ENCODE measurements at regions of chr9 and their contacts with region 1.

Region 1: GRCh38 chr9:86282077-86282978 is at the start of gene ISCA1:
- DNase-seq: peak; percentile 98
- H3K4me3 ChIP-seq: peak within 1 kb of the TSS; percentile 21 to 86 (median 37)
- H3K27ac ChIP-seq: peak within 1 kb of the TSS; percentile 94 to 98 (median 98)
- H3K4me1 ChIP-seq: peaks cover 22 to 28% of the 10 kb centered on the region in 2 donors
- H3K27me3 ChIP-seq: no peaks in the 10 kb centered on the region
- CTCF ChIP-seq: no peak
- POLR2A ChIP-seq: peak; percentile 76 to 95
- total RNA-seq, gene ISCA1: 47.9 to 79.1 (median 63.8) TPM

Region 2: DNA sequence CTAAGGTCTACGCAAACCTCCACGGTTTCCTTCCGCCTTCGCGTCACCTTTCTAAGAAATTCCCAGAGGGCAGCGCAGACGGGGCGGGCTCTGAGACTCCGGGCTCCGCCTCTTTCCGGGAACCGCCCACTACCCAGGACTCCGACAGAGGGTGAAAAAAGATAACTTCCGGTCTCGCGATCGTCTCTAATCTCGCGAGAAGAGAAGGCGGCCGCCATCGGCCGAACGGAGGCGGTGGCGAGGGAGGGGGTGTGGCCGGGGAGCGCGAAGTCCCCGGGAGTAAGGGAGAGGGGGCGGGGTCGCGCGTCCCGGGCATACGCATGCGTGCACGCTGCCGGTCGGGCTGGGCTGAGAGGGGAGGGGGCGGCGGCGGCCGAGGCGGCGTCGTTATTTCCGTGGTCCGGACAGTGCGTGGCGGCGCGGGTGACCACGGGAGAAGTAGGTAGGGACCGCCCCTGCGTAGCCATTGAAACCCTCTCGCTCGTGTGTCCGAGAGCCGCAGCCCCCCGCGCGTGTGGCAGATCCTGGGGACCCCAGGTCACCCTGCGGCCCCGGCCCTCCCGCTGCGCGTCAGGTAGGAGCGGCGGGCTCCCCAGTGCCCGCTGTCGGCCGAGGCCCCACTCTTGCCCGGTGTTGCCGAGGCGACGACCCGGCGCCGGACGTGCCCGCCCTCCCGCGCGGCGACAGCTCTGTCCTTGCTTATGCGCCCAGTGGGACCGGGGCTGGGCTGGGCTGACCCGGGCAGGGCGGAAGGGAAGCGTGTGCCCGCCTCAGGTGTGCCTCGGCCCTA is 341.3 kb before region 1 on chr9 and contains the start of gene NAA35:
- intact Hi-C with region 1: loop called (anchors 10 kb)
- DNase-seq: peak; percentile 98 to 99
- H3K4me3 ChIP-seq: peak within 1 kb of the TSS; percentile 29 to 88 (median 78)
- H3K27ac ChIP-seq: peak within 1 kb of the TSS; percentile 89 to 96 (median 91)
- H3K4me1 ChIP-seq: peaks cover 15 to 17% of the 10 kb centered on the region in 2 donors
- H3K27me3 ChIP-seq: no peaks in the 10 kb centered on the region
- CTCF ChIP-seq: peak in 1 of 6 experiments; percentile 14
- POLR2A ChIP-seq: peak in 1 of 2 donors; percentile 93
- total RNA-seq, gene NAA35: 23.2 to 31.1 (median 26.2) TPM

Region 3: GRCh38 chr9:86099701-86100364 is 182.5 kb before region 1 on chr9:
- intact Hi-C with region 1: loop called (anchors 10 kb)
- DNase-seq: peak; percentile 26 to 42
- H3K4me3 ChIP-seq: peak overlapping the region in 2 of 3 donors; percentile 45 to 90
- H3K27ac ChIP-seq: peak overlapping the region in 2 of 3 donors; percentile 86
- H3K4me1 ChIP-seq: peaks cover 13 to 17% of the 10 kb centered on the region in 2 donors
- H3K27me3 ChIP-seq: no peaks in the 10 kb centered on the region
- CTCF ChIP-seq: peak in 1 of 6 experiments; percentile 5
- POLR2A ChIP-seq: peak in 1 of 2 donors; percentile 13

Region 4: DNA sequence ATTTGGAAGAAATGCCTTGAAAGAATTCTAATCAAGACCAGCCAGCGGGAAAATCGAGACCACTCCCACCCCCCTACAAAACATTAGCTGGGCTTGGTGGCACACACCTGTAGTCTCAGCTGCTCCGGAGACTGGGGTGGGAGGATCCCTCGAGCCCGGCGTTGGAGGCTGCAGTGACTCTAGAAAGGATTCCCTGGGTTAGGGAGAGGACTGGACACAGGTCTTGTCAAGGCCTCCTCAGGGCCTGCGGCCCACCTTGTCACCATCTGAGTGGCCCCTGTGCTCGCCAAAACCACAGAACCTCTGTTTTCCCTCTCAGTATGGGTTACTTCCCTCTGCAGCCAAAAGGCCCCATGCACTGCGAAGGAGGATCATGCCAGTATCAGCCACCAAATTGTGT is 166.4 kb before region 1 on chr9:
- intact Hi-C with region 1: no loop called
- DNase-seq: no peak
- H3K4me3 ChIP-seq: no peak overlapping the region
- H3K27ac ChIP-seq: no peak overlapping the region
- H3K4me1 ChIP-seq: no peaks in the 10 kb centered on the region
- H3K27me3 ChIP-seq: no peaks in the 10 kb centered on the region
- CTCF ChIP-seq: no peak
- POLR2A ChIP-seq: no peak

Region 5: DNA sequence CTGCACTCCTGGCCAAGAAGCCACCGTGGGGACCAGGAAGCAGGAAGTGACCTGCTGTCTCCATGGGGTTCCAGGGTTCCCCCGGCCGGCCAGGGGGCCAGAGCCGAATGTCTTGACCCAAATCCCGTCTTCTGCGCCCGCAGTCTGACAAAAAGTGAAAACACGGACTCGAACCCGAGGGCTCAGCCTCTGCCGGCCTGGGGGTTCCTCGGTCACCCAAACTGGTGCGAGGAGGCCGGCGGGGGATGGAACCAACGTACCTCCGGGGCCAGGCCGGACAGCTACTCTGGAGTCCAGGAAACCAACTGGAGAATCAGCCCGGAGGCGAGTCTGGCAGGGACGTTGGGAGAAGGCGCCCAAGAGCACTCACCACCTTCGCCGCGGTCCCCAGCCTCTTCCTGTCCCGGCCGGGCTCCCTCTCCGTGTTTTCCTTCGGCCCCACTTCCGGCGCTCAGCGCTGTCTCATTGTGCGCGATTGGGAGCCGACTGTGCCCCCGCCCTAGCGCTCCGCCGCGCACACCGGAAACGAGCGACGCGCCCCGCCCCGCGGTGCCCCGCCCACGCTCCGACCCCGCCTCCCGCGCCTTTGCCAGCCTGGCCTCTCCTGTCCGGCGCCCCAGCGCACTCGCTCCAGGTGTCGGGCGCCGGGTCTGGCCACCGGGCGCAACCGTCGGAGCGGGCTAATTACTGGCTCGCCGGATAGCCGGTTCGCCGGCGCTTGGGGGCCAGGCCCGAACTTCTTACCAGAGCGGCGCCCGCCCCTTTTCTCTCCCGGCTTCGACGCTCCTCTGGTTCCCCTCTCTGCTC is 71.9 kb after region 1 on chr9 and contains the start of gene TUT7:
- intact Hi-C with region 1: loop called (anchors 10 kb)
- DNase-seq: peak; percentile 94 to 95
- H3K4me3 ChIP-seq: peak within 1 kb of the TSS; percentile 70 to 83 (median 76)
- H3K27ac ChIP-seq: peak within 1 kb of the TSS; percentile 80 to 95 (median 90)
- H3K4me1 ChIP-seq: peaks cover 19 to 31% of the 10 kb centered on the region in 2 donors
- H3K27me3 ChIP-seq: no peaks in the 10 kb centered on the region
- CTCF ChIP-seq: no peak
- POLR2A ChIP-seq: peak in 1 of 2 donors; percentile 89
- total RNA-seq, gene TUT7: 32.0 to 40.6 (median 33.7) TPM

Measured in thyroid gland (tissue), 4 donors.